Activated T-helper 1 cell treated with anti-CD3 and anti-CD28 coated beads, Interleukin-12 subunit alpha, Interleukin-12 subunit beta, Interleukin-2, Interleukin-4 antibody, amounts not matched to agents 30 ng/mL and 10 ng/mL and 1 ng/mL, durations not matched to agents 14 hours and 24 hours and 36 hours (primary cell): ENCODE measurements at regions of chr16 and their contacts with region 1.

Region 1: GRCh38 chr16:527006-527753 is at the start of gene CAPN15:
- DNase-seq: peak; percentile 84
- H3K4me3 Mint-ChIP-seq: peak within 1 kb of the TSS; percentile 95
- H3K27ac Mint-ChIP-seq: peak within 1 kb of the TSS; percentile 94
- H3K4me1 Mint-ChIP-seq: peaks cover 9% of the 10 kb centered on the region
- H3K27me3 Mint-ChIP-seq: no peaks in the 10 kb centered on the region
- total RNA-seq, gene CAPN15: 122 and 124 TPM in 2 replicates

Region 2: GRCh38 chr16:352547-353403 is 174.4 kb before region 1 on chr16 and contains the start of gene AXIN1:
- intact Hi-C with region 1: loop called (anchors 1 kb)
- DNase-seq: peak; percentile 97
- H3K4me3 Mint-ChIP-seq: peak within 1 kb of the TSS; percentile 92
- H3K27ac Mint-ChIP-seq: peak within 1 kb of the TSS; percentile 87
- H3K4me1 Mint-ChIP-seq: peaks cover 8% of the 10 kb centered on the region
- H3K27me3 Mint-ChIP-seq: peaks cover 4% of the 10 kb centered on the region
- total RNA-seq, gene AXIN1: 28.1 and 30.3 TPM in 2 replicates

Region 3: DNA sequence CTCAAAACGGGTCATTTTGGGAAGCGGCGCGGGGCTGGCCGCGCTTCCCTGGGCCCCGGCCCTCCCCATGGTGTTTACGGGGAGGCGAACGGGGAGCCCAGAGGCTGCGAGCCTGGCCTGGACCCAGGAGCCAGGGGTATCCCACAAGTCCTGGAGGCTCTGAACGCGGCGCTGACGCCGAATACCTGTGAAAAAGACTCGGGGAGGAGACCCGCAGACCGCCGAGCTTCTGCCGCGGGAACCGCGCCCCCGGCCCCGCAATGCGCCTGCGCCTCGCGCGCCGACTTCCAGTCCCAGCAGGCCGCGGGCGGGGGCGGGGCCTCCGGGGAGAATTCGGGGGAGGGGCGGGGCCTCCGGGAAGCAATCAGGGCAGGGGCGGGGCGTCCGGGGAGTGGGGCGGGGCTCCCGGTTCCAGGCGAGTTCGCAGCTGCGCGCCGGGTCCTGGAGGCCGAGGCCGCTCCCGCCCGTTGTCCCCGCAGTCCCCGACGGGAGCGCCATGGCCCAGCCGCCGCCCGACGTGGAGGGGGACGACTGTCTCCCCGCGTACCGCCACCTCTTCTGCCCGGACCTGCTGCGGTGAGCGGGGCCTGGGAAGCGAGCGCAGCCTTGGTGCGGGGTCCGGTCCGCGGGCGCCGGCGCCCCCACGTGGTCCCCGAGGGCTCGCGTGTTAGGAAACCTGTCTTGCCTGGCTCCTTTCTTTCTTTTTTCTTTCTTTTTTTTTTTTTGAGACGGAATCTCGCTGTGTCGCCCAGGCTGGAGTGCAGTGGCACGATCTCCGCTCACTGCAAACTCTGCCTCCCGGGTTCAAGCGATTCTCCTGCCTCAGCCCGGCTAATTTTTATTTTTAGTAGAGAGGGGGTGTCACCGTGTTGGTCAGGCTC is 125.5 kb before region 1 on chr16 and contains the start of gene DECR2:
- intact Hi-C with region 1: loop called (anchors 2 kb)
- DNase-seq: peak; percentile 90
- H3K4me3 Mint-ChIP-seq: peak within 1 kb of the TSS; percentile 87
- H3K27ac Mint-ChIP-seq: peak within 1 kb of the TSS; percentile 58
- H3K4me1 Mint-ChIP-seq: peaks cover 11% of the 10 kb centered on the region
- H3K27me3 Mint-ChIP-seq: peaks cover 2% of the 10 kb centered on the region
- total RNA-seq, gene DECR2: 18.0 and 20.1 TPM in 2 replicates

Region 4: GRCh38 chr16:414395-415169 is 112.6 kb before region 1 on chr16:
- intact Hi-C with region 1: no loop called
- DNase-seq: no peak
- H3K4me3 Mint-ChIP-seq: no peak overlapping the region
- H3K27ac Mint-ChIP-seq: no peak overlapping the region
- H3K4me1 Mint-ChIP-seq: no peaks in the 10 kb centered on the region
- H3K27me3 Mint-ChIP-seq: no peaks in the 10 kb centered on the region

Region 5: GRCh38 chr16:468068-468821 is 58.9 kb before region 1 on chr16:
- intact Hi-C with region 1: no loop called
- DNase-seq: no peak
- H3K4me3 Mint-ChIP-seq: no peak overlapping the region
- H3K27ac Mint-ChIP-seq: no peak overlapping the region
- H3K4me1 Mint-ChIP-seq: no peaks in the 10 kb centered on the region
- H3K27me3 Mint-ChIP-seq: no peaks in the 10 kb centered on the region

Region 6: GRCh38 chr16:508884-509736 is 18.1 kb before region 1 on chr16:
- intact Hi-C with region 1: no loop called
- DNase-seq: no peak
- H3K4me3 Mint-ChIP-seq: no peak overlapping the region
- H3K27ac Mint-ChIP-seq: no peak overlapping the region
- H3K4me1 Mint-ChIP-seq: no peaks in the 10 kb centered on the region
- H3K27me3 Mint-ChIP-seq: no peaks in the 10 kb centered on the region

Region 7: DNA sequence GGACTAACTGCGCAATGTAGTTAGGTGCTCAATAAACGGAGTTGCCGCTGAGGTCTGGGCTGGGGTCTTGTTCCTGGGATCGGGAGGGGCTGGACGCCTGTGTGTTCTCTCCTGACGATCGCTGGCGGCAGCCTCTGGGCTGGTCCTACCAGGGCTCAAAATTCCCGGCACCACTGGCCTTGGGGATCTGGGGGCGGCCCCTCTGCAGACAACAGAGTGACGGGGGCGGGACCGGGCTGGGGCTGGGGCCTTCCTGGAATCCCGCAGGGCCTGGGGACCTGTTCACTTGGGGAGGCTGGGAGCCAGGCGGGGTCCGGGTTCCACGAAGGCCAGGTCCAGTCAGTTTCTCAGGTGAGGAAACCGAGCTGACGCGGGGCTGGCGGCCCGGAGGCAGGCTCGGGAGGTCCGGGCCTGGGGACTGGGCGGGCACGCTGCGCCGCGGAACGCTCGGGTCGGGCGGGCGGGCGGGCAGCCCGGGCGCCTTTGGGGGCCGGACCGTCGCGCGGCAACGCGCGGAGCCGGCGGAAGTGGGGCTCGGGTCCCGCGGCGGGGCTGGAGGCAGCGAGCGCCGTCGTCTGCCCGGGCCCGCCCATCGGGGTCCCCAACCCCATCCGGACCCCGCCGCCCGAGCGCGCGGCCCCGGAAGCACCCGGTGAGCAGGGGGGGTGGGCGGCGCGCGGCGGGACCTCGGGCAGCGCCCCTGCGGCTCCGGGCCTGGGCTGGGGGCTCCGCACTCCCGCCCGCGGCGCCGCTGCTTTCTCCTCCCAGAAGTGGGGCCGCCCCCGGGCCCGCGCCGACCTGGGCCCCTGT is 42.5 kb after region 1 on chr16 and contains the start of gene PIGQ:
- intact Hi-C with region 1: loop called (anchors 1 kb)
- DNase-seq: peak; percentile 65
- H3K4me3 Mint-ChIP-seq: peak within 1 kb of the TSS; percentile 85
- H3K27ac Mint-ChIP-seq: peak within 1 kb of the TSS; percentile 89
- H3K4me1 Mint-ChIP-seq: peaks cover 32% of the 10 kb centered on the region
- H3K27me3 Mint-ChIP-seq: no peaks in the 10 kb centered on the region
- total RNA-seq, gene PIGQ: 50.1 and 52.6 TPM in 2 replicates

Region 8: DNA sequence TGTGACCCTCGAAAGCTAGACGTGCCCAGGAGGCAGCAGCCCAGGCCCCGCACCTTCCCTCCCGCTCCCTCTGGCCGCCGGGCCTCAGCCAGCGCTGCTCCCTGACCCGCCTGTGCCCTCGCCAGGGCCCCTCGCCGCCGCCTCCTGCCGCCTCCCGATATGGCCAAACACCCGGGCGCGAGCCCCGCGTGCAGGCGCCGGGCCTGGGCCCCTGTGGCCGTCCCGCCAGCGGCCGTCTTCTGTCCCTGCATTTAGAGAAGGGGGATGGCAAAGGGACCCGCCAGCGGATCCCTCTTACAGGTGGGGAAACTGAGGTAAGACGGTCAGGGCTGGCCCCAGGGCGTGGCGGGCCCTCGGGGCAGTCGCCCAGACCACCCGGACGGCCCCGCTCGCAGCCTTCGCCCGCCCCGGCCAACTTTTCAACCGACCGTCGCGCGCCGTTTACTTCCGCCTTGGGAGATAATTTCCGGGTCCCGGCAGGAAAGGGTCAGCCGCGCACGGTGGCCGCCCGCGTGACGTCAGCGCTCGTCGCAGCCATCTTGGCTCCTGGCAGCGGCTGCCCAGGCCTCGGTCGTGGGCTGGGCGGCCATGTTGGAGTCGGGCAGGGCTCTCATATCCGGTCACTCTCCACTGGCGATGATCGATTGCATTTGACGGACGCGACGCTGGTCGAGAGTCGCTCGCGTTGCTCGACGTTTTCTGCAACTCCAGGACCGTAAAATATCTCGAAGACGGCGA is 280.3 kb after region 1 on chr16:
- intact Hi-C with region 1: loop called (anchors 5 kb)
- DNase-seq: peak; percentile 88
- H3K4me3 Mint-ChIP-seq: peak overlapping the region; percentile 100
- H3K27ac Mint-ChIP-seq: peak overlapping the region; percentile 97
- H3K4me1 Mint-ChIP-seq: peaks cover 12% of the 10 kb centered on the region
- H3K27me3 Mint-ChIP-seq: peaks cover 7% of the 10 kb centered on the region